RWPE1 (cell line): ENCODE measurements at regions of chr14 and their contacts with region 1.

Region 1: GRCh38 chr14:104130974-104131651 is 7.3 kb upstream of the KIF26A start:
- DNase-seq: peak; percentile 69
- H3K27ac ChIP-seq: no peak overlapping the region
- CTCF ChIP-seq: peak; percentile 67

Region 2: GRCh38 chr14:104078031-104078455 is 53.1 kb before region 1 on chr14:
- CTCF ChIA-PET with region 1: interaction called, 25 read pairs
- POLR2A ChIA-PET with region 1: no interaction called
- DNase-seq: peak; percentile 87
- H3K27ac ChIP-seq: no peak overlapping the region
- CTCF ChIP-seq: peak; percentile 99

Region 3: GRCh38 chr14:104094709-104095438 is 36.2 kb before region 1 on chr14:
- CTCF ChIA-PET with region 1: interaction called, 10 read pairs
- POLR2A ChIA-PET with region 1: no interaction called
- DNase-seq: peak; percentile 73
- H3K27ac ChIP-seq: no peak overlapping the region
- CTCF ChIP-seq: peak; percentile 92

Region 4: GRCh38 chr14:104171029-104171697 is 40.0 kb after region 1 on chr14:
- CTCF ChIA-PET with region 1: no interaction called
- POLR2A ChIA-PET with region 1: no interaction called
- DNase-seq: peak; percentile 74
- H3K27ac ChIP-seq: peak overlapping the region; percentile 65
- CTCF ChIP-seq: no peak